Stomach (tissue), 19 donors: ENCODE measurements at regions of chr19 and their contacts with region 1.

Region 1: DNA sequence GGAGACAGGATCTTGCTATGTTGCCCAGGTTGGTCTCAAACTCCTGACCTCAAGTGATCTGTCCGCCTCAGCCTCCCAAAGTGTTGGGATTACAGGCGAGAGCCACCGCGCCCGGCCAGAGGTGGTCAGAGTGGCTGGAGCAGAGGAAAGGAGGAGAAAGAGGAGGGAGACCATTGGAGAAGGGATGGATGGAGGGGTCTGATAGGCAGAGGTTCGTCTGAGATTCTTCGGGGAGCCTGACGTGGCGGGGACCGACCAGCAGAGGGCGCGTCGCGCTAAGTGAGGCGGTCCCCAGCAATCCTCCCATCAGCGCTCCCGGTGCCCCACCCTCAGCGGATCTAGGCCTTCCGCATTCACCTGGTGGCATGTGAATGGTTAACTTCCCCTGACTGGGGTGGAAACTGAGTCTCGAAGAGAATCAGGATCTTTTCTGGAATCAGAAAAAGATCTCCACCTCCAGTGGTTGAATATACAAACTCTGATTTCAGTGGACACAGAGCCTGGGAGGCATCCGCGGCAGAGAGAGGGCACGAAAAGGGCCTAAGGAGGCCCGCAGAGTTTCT is 8.8 kb downstream of the GTPBP3 start:
- DNase-seq: peak; percentile 82 to 87
- H3K4me3 ChIP-seq: no peak overlapping the region
- H3K27ac ChIP-seq: peak overlapping the region in 4 of 5 donors; percentile 54 to 77 (median 62)
- H3K4me1 ChIP-seq: peaks cover 0 to 29% (median 15%) of the 10 kb centered on the region in 4 donors
- H3K27me3 ChIP-seq: peaks cover 0 to 34% (median 0%) of the 10 kb centered on the region in 3 donors
- CTCF ChIP-seq: peak in 5 of 7 experiments; percentile 81 to 97 (median 95)
- EP300 ChIP-seq: no peak
- POLR2A ChIP-seq: no peak

Region 2: DNA sequence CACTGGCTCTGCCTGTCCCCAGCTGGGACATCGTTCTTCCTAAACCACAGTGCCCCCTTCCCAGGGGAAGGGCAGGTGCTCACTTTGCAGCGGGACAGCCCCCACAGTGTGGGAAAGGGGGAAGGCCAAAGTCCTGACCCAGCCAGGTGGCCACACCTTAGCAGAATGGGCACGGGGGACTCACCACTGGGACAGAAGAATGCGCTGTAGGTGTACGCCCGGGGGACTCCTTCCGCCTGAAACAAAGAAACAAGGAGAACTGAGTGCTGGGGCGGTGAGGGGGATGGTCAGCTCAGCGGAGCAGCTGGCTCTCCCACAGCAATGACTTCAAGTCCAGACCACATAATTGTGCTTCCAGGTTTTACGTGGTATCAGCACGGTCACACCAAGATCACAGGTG is 408.0 kb before region 1 on chr19:
- intact Hi-C with region 1: no loop called
- DNase-seq: no peak
- H3K4me3 ChIP-seq: no peak overlapping the region
- H3K27ac ChIP-seq: no peak overlapping the region
- H3K4me1 ChIP-seq: no peaks in the 10 kb centered on the region
- H3K27me3 ChIP-seq: no peaks in the 10 kb centered on the region
- CTCF ChIP-seq: no peak
- EP300 ChIP-seq: no peak
- POLR2A ChIP-seq: no peak

Region 3: GRCh38 chr19:17215125-17215971 is 130.8 kb before region 1 on chr19 and contains the start of gene USE1:
- intact Hi-C with region 1: no loop called
- DNase-seq: peak; percentile 93 to 98
- H3K4me3 ChIP-seq: peak within 1 kb of the TSS; percentile 50 to 80 (median 69)
- H3K27ac ChIP-seq: peak within 1 kb of the TSS; percentile 93 to 98 (median 94)
- H3K4me1 ChIP-seq: peaks cover 14 to 26% (median 25%) of the 10 kb centered on the region in 4 donors
- H3K27me3 ChIP-seq: no peaks in the 10 kb centered on the region
- CTCF ChIP-seq: peak in 1 of 7 experiments; percentile 11
- EP300 ChIP-seq: no peak
- POLR2A ChIP-seq: no peak
- total RNA-seq, gene USE1: 16.2 to 113 (median 22.1) TPM in 4 of 5 donors, not detected in the other

Region 4: DNA sequence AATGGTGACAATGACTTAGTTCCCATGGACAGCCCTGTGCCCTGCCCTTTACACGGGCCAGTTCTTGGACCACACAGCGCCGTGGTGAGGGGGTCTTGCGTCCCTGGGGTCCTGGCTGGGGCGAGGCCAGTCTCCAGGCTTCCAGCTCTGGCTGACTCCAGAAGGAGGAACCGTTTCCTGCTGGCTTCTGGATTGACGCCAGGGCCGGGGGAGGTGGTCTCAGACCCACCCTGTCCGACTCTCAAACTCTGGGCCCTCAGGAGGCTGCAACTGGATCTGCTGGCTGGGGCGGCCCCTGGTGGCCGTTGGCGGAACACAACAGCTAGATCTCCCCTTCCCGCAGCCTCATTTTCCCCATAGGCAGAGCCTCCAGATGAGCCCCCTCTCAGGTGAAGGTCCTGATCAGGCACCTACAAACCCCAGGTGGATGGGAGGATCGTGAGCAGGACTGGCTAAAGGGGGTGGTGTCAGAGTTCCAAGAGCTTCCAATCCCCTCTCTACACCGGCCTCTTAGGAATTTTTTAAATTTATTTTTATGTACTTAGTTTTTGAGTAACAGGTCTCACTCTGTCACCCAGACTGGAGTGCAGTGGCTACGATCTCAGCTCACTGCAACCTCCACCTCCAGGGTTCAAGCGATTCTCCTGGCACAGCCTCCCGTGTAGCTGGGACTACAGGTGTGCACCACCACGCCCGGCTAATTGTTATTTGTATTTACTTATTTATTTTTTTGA is 39.9 kb after region 1 on chr19:
- intact Hi-C with region 1: loop called (anchors 5 kb)
- DNase-seq: peak; percentile 65 to 87
- H3K4me3 ChIP-seq: no peak overlapping the region
- H3K27ac ChIP-seq: no peak overlapping the region
- H3K4me1 ChIP-seq: peaks cover 9 to 21% (median 16%) of the 10 kb centered on the region in 4 donors
- H3K27me3 ChIP-seq: peaks cover 0 to 12% (median 0%) of the 10 kb centered on the region in 3 donors
- CTCF ChIP-seq: peak in 5 of 7 experiments; percentile 73 to 92 (median 89)
- EP300 ChIP-seq: no peak
- POLR2A ChIP-seq: no peak